Aorta (tissue), 5 donors: ENCODE measurements at regions of chr2 and their contacts with region 1.

Region 1: GRCh38 chr2:25521665-25522387 is 151.6 kb downstream of the DTNB start:
- DNase-seq: no peak
- ATAC-seq: peak; percentile 84
- H3K4me3 ChIP-seq: peak overlapping the region; percentile 14 to 69
- H3K27ac ChIP-seq: no peak overlapping the region
- H3K4me1 ChIP-seq: no peaks in the 10 kb centered on the region
- H3K27me3 ChIP-seq: no peaks in the 10 kb centered on the region

Region 2: DNA sequence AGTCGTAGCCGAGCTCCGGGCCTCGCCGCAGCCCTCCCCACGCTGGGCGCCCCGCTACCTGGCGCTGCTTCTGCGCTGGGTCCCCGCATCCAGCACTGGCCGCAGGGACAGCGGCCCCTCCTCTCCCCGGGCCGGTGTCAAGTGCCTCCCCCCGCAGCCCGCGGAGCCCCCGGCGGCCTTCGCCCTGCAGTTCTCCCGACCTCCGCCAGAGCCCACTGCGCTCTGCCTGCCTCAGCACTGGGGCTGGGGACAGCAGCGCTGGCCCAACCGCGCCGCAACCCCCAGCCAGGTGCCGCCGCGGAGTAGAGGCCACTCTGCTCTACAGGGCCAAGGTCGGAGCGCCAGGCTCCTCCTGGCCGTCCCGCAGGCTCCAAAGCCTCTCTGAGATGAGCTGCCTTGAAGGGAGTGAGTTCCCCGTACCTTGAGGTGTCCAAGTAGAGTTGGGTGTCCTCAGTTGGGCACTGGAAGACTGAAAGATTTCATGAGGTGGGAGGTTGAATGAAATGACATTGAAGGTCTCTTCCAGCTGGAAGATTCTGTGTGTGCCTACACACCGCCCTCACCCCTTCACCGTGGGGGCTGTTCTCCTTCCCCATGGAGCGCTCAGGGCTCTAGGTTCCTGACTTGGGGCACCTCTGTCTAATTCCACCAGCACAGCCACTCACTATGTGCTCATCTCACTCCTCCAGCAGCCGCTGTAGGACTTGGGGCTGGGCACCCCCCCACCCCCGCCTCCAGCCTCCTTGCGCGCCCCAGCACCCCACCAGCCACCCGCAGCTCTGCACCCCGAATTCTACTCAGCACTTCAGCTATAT is 179.2 kb before region 1 on chr2:
- intact Hi-C with region 1: loop called in 1 of 2 experiments (anchors 5 kb)
- DNase-seq: peak; percentile 90 to 94
- ATAC-seq: peak; percentile 92
- H3K4me3 ChIP-seq: peak overlapping the region; percentile 87 to 96
- H3K27ac ChIP-seq: peak overlapping the region in 1 of 2 donors; percentile 42
- H3K4me1 ChIP-seq: no peaks in the 10 kb centered on the region
- H3K27me3 ChIP-seq: no peaks in the 10 kb centered on the region

Region 3: DNA sequence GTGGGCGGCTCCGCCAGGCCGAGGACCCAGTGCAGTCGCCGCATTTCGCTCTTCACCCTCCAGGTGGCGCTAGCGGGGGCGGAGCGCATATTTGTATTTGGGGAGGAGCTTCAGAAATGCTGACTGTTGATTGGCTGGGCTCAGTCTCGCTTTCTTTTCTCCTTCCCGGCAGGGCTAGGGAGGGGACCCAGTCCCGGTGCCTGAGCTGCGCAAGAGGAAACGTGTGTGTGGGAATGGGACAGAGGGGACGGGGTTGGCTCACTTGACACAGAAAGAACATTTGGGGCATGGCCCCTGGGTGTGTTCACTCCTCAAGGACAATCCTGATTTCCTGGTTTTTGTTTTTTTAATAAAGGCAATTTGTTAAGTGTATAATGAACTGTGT is 159.8 kb before region 1 on chr2:
- intact Hi-C with region 1: loop called in 1 of 2 experiments (anchors 5 kb)
- DNase-seq: peak; percentile 93 to 97
- ATAC-seq: peak; percentile 98
- H3K4me3 ChIP-seq: peak overlapping the region in 1 of 2 donors; percentile 32
- H3K27ac ChIP-seq: no peak overlapping the region
- H3K4me1 ChIP-seq: no peaks in the 10 kb centered on the region
- H3K27me3 ChIP-seq: no peaks in the 10 kb centered on the region